ENCODE measurements at regions of chr2 and their contacts with region 1.

Region 1: DNA sequence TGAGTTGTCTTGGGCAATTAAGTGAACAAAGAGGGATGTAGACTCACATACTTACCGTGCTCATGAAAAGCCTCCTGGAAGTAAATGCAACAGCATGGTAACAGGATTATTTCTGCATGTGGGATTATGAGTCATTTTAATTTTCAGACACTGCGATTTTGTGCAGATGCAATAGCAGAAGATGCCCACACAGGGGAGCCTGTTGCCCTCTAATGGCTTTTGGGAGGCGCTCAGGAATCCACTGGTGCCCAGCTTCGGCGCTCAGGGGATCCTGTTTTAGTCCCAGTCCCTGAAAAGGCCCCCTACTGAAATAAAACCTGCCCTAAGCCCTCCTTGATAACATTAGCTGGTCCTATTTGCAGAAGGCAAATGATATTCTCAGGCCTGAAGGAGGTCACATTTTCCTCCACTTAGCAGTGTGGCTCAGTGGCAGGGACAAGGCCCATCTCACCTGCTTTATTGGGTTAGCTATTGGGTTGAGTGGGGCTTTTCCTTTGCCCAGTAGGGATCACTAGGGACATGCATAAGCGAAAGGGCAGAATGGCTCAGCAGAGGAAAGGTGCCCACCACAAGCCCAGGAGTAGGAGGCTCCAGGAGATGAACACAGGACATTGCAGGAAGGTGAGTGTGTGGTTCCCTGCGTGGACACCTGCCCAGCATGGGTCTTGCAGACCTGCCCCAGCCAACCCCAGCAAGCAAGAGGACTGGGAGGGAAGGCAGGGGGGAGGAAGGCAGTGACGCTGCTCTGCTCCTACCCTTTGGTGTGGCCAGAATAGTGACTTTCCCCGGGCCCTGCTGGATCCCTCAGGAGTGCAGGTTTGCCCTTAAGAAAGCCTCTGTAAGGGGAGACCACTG is 26.5 kb upstream of the KCNS3 start:
- DNase-seq: no peak
- H3K4me3 ChIP-seq: no peak overlapping the region
- H3K27ac ChIP-seq: no peak overlapping the region
- H3K4me1 ChIP-seq: peaks cover 0 to 4% (median 0%) of the 10 kb centered on the region in 4 donors
- H3K27me3 ChIP-seq: no peaks in the 10 kb centered on the region
- CTCF ChIP-seq: peak; percentile 88 to 96 (median 89)
- EP300 ChIP-seq: no peak
- POLR2A ChIP-seq: no peak

Region 2: DNA sequence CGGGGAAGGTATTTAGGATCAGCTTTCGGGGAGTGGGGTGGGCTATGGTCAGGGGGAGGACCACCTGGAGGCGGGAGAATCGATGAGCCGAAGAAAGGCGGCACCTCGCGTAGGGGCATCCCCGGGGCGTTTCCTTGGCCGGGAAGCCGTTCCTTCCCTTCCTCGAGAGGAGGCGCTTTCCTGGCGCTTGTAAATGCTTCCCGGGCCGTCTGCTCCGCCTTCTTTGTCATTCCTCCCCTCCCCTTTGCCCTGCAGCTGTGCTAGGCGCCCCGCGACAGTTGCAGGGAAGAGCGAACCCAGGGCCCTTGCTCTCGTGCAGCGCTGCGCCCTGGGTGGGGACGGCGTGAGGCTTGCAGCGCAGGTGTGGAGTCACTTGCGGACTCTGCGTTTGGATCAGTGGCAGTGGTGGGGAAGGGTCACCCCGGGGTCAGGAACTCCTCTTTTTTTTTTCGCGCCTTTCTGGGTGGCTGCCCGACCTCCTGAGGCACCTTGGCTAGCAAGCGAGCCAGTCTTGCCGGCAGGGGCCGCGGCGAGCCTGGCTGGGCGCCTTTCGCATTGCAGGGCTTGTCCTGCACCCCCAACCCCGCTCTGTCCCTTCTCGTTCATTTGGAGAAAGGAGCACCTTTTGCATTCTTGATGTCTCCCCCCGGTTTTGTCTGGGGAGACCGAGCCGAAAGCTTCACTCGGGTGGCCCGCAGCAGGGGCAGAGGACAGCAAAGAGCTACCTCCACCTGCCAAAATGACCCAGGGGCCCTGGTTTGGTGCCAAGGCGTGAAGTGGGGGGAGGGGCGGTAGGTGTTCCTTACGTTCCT is 27.3 kb after region 1 on chr2:
- intact Hi-C with region 1: no loop called
- DNase-seq: no peak
- H3K4me3 ChIP-seq: peak overlapping the region; percentile 67 to 81 (median 77)
- H3K27ac ChIP-seq: peak overlapping the region; percentile 72 to 82 (median 78)
- H3K4me1 ChIP-seq: peaks cover 10 to 31% (median 29%) of the 10 kb centered on the region in 4 donors
- H3K27me3 ChIP-seq: no peaks in the 10 kb centered on the region
- CTCF ChIP-seq: peak in 1 of 3 experiments; percentile 28
- EP300 ChIP-seq: no peak
- POLR2A ChIP-seq: no peak

Region 3: DNA sequence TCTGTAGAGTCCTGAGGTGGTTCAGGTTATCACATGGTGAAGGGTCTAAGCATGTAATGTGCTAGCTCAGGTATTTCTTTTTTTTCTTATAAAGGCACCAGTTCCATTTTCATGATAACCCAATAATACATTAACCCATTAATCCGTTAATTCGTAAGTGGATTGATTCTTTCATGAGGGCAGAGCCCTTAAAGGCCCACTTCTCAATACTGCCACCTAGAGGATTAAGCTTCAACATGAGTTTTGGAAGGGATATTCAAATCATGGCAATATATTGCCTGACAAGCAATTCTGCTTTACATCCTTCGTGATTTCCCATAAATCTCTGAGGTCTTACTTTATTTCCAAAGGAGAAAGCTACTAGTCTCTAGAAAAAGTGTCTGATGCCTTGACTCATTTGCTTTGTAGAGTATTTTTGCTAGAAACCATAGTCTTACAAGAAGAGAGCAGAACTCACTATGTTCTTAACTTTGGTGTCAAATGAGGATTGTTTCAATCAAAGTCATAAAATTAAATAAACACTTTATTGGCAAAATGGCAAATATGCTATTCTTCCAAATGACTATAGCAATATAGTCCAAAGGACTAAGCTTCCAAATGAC is 297.8 kb after region 1 on chr2:
- intact Hi-C with region 1: loop called (anchors 2 kb)
- DNase-seq: no peak
- H3K4me3 ChIP-seq: no peak overlapping the region
- H3K27ac ChIP-seq: no peak overlapping the region
- H3K4me1 ChIP-seq: no peaks in the 10 kb centered on the region
- H3K27me3 ChIP-seq: no peaks in the 10 kb centered on the region
- CTCF ChIP-seq: peak; percentile 49 to 79 (median 66)
- EP300 ChIP-seq: no peak
- POLR2A ChIP-seq: no peak

Region 4: DNA sequence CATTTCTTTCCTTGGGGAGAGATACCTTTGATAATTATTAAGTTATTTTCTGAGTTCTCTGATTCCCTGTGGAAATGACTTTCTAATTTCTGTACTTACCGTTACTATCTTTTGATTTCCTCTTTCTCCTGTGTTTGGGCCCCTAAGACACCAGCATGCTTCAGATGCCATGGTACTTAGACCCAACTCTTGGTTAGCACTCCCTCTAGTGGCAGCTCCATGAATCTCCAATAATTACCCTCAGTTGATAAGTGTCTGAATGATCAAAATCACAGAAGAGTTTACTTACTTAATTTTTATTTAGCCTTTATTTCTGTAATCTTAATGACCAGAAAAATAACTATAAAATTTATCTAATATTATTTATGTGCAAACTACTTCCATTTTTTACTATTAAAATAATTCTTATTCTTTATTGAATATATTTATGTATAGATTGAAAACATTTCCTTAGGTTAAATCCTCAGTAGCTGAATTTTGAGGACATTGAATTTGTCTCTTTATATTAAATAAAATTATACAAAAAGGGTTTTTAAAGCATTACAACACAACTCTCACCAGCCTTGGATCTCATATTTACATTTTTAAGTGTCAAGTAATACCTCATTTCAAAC is 326.9 kb after region 1 on chr2:
- intact Hi-C with region 1: loop called (anchors 2 kb)
- DNase-seq: no peak
- H3K4me3 ChIP-seq: no peak overlapping the region
- H3K27ac ChIP-seq: no peak overlapping the region
- H3K4me1 ChIP-seq: no peaks in the 10 kb centered on the region
- H3K27me3 ChIP-seq: no peaks in the 10 kb centered on the region
- CTCF ChIP-seq: peak; percentile 78 to 87 (median 80)
- EP300 ChIP-seq: no peak
- POLR2A ChIP-seq: no peak

Measured in esophagus muscularis mucosa (tissue), 4 donors.